HepG2 (cell line): ENCODE measurements at regions of chr21 and their contacts with region 1.

Region 1: DNA sequence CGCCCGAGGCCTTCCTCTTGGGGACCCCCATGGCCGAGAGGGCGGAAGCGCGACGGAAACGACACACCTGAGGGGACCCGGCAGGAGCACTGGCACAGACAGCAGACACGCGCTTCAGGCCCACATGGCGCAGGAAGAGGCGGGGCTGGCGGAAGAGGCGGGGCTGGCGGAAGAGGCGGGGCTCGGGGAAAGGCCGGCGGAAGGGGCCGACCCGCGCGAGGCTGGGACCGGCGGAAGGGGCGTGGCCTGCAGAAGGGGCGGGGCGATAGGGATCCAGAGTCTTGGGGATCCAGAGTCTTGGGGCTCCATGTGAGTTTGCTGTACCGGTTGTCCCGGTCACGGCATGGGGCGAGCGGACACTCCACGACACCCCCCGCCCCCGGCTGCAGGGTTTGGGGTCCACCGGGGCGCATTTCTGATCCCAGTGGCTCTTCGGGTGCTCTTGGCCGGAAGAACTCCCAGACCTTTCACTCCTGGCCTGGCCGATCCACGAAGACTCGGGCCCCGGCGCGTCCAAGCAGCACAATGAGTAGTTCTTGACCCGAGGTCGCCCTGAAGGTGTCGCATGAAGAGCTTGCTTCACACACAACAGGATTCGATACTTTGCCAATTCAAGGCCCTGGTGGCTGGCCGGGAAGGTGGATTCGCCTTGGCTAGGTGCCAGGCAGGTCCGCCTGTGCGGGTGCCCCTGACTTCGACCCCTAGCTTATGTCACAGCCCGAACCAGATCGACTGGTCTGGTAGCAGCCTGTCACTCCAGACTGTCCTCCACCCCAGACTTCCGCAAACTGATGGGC is at the start of gene URB1:
- DNase-seq: peak; percentile 75
- ATAC-seq: peak; percentile 94
- H3K4me3 ChIP-seq: peak within 1 kb of the TSS; percentile 79 to 88 (median 88)
- H3K27ac ChIP-seq: peak within 1 kb of the TSS; percentile 89
- H3K4me1 ChIP-seq: peaks cover 46% of the 10 kb centered on the region
- H3K27me3 ChIP-seq: no peaks in the 10 kb centered on the region
- CTCF ChIP-seq: peak; percentile 45
- EP300 ChIP-seq: no peak
- POLR2A ChIP-seq: peak; percentile 80 to 92; a peak in 3 of 4 replicates
- RAD21 ChIP-seq: 0 out of 2 replicates have a peak, but pooled peaks have one; percentile 10
- total RNA-seq, gene URB1: 13.5 and 16.7 TPM in 2 replicates

Region 2: GRCh38 chr21:32329776-32330175 is 63.3 kb before region 1 on chr21:
- CTCF ChIA-PET with region 1: no interaction called
- POLR2A ChIA-PET with region 1: interaction called, 4 read pairs
- in situ Hi-C with region 1: no loop called
- intact Hi-C with region 1: loop called (anchors 1 kb)
- DNase-seq: peak; percentile 27
- ATAC-seq: no peak
- H3K4me3 ChIP-seq: no peak overlapping the region
- H3K27ac ChIP-seq: peak overlapping the region; percentile 17
- H3K4me1 ChIP-seq: peaks cover 47% of the 10 kb centered on the region
- H3K27me3 ChIP-seq: no peaks in the 10 kb centered on the region
- CTCF ChIP-seq: no peak
- EP300 ChIP-seq: no peak
- POLR2A ChIP-seq: no peak
- RAD21 ChIP-seq: no peak

Region 3: GRCh38 chr21:32612075-32612998 is 219.3 kb after region 1 on chr21 and contains the start of gene CFAP298:
- CTCF ChIA-PET with region 1: no interaction called
- POLR2A ChIA-PET with region 1: interaction called, 22 read pairs
- in situ Hi-C with region 1: no loop called
- intact Hi-C with region 1: no loop called
- DNase-seq: peak; percentile 85
- ATAC-seq: peak; percentile 94
- H3K4me3 ChIP-seq: peak within 1 kb of the TSS; percentile 69 to 90 (median 88)
- H3K27ac ChIP-seq: peak within 1 kb of the TSS; percentile 96
- H3K4me1 ChIP-seq: peaks cover 14% of the 10 kb centered on the region
- H3K27me3 ChIP-seq: no peaks in the 10 kb centered on the region; a peak in 1 of 5 replicates
- CTCF ChIP-seq: no peak
- EP300 ChIP-seq: no peak
- POLR2A ChIP-seq: peak; percentile 71 to 87
- RAD21 ChIP-seq: peak; percentile 27; the same call in 1 of the 2 replicates
- total RNA-seq, gene CFAP298: 62.2 and 67.5 TPM in 2 replicates